Tibial artery (tissue), 4 donors: ENCODE measurements at regions of chr7 and their contacts with region 1.

Region 1: GRCh38 chr7:148503875-148504487 is 86.6 kb upstream of the C7orf33 start:
- DNase-seq: no peak
- H3K4me3 ChIP-seq: no peak overlapping the region
- H3K27ac ChIP-seq: no peak overlapping the region
- H3K4me1 ChIP-seq: no peaks in the 10 kb centered on the region
- H3K27me3 ChIP-seq: peaks cover 0 to 40% of the 10 kb centered on the region in 2 donors
- CTCF ChIP-seq: peak; percentile 66 to 76

Region 2: GRCh38 chr7:148286150-148286549 is 217.8 kb before region 1 on chr7:
- intact Hi-C with region 1: no loop called
- DNase-seq: no peak
- H3K4me3 ChIP-seq: no peak overlapping the region
- H3K27ac ChIP-seq: no peak overlapping the region
- H3K4me1 ChIP-seq: no peaks in the 10 kb centered on the region
- H3K27me3 ChIP-seq: no peaks in the 10 kb centered on the region
- CTCF ChIP-seq: peak in 1 of 2 experiments; percentile 22

Region 3: DNA sequence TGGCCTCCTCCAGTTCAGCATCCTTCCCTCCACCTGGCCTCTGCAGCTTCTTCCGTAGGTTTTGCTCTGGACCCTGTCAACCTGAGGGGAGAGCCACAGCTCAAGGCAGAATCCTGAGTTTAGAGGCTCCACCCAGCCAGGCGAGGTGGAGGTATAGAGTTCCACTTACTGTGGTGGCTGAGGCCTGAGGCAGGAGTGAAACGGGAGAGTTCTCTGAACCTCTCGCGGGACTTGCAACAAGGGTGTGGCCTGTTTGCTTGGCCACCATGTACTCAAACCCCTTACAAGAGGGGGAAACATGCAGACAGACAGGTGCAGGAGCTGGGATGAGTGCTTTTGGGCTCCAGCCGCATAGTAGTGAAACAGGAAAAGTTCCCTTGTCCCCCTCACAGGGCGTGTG is 67.4 kb before region 1 on chr7:
- intact Hi-C with region 1: no loop called
- DNase-seq: no peak
- H3K4me3 ChIP-seq: no peak overlapping the region
- H3K27ac ChIP-seq: no peak overlapping the region
- H3K4me1 ChIP-seq: no peaks in the 10 kb centered on the region
- H3K27me3 ChIP-seq: no peaks in the 10 kb centered on the region
- CTCF ChIP-seq: no peak

Region 4: GRCh38 chr7:148763622-148764021 is 259.6 kb after region 1 on chr7:
- intact Hi-C with region 1: no loop called
- DNase-seq: no peak
- H3K4me3 ChIP-seq: no peak overlapping the region
- H3K27ac ChIP-seq: no peak overlapping the region
- H3K4me1 ChIP-seq: no peaks in the 10 kb centered on the region
- H3K27me3 ChIP-seq: no peaks in the 10 kb centered on the region
- CTCF ChIP-seq: no peak

Region 5: DNA sequence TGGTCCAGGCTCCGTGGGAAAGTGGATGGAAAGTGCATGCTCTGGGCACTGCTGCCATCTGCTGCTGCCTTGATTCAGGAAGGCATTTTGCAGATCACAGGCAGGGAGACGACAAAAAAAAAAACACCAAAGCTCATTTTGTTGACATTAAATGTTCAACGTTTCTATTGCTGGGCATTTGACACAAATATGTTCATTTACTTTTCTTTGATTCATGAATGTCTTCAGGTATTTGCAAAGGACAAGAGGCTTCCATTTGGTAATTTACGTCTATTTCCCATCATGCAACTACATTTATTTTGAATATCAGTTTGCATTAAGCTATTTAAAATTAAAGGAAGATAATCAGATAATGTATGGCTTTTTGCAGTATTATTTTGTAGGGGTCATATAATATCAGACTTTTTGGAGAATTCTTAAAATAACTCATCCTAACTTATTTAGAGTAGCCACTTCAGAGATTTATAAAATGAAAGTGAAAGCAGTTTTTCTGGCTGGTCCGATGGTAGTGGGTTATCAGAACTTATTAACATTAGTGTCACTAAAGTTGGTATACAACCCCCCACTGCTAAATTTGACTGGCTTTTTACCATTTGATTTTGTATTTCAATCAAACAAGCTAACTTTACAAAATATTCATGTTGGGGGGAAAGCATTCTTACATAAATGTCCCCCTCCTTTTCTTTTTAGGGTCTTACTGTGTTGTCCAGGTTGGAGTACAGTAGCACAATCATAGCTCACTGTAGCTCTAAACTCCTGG is 459.0 kb after region 1 on chr7:
- intact Hi-C with region 1: loop called (anchors 5 kb)
- DNase-seq: peak; percentile 54 to 77
- H3K4me3 ChIP-seq: peak overlapping the region; percentile 50 to 61
- H3K27ac ChIP-seq: peak overlapping the region; percentile 72 to 75
- H3K4me1 ChIP-seq: peaks cover 0 to 21% (median 11%) of the 10 kb centered on the region in 4 donors
- H3K27me3 ChIP-seq: no peaks in the 10 kb centered on the region
- CTCF ChIP-seq: peak; percentile 28 to 69